ENCODE measurements at regions of chr12 and their contacts with region 1.

Region 1: DNA sequence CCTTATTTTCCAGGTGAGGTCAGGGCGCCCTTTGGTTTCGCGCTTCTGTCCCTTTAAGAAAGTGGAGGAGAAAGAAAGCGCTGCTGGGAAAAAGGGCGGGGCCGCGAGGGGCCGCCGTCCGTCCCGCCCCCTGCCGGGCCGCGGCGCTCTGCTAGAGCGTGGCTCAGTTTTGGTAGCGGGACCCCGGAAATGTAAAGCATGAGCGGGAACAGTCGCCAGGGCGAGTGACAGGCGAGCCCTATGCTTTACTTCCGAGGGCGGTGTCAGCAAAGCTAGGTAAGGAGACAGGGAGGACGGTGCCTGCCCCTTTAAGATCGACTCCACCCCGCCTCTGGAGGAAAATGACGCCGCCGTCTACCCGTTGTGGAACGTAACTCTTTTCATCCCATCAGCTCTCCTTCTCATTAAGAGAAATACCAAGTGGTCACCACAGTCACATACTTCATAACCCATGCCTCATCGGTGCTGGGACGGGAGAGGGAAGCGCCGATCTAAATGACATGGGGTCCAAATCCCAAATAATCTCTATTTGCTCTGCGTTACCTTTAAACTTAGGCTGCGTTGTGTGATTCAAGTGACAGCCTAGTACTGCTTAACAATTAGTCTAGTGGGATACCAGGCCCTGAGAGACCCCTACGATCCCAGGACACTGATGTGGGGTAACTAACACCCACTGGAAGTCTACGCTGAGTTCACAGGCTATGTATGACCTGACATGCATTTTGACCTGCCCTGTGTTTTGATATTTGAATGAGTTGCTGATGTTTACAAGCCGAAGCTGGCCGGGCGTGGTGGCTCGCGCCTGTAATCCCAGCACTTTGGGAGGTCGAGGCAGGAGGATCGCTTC is at the start of gene ETFBKMT:
- DNase-seq: peak; percentile 96
- H3K4me3 ChIP-seq: peak within 1 kb of the TSS; percentile 53
- H3K27ac ChIP-seq: peak within 1 kb of the TSS; percentile 89
- H3K4me1 ChIP-seq: peaks cover 3% of the 10 kb centered on the region
- H3K27me3 ChIP-seq: no peaks in the 10 kb centered on the region
- CTCF ChIP-seq: peak; percentile 44
- total RNA-seq, gene ETFBKMT: 1.9 and 2.6 TPM in 2 replicates

Region 2: GRCh38 chr12:31558521-31558920 is 100.8 kb before region 1 on chr12:
- CTCF ChIA-PET with region 1: no interaction called
- POLR2A ChIA-PET with region 1: no interaction called
- intact Hi-C with region 1: no loop called
- DNase-seq: no peak
- H3K4me3 ChIP-seq: no peak overlapping the region
- H3K27ac ChIP-seq: no peak overlapping the region
- H3K4me1 ChIP-seq: no peaks in the 10 kb centered on the region
- H3K27me3 ChIP-seq: no peaks in the 10 kb centered on the region
- CTCF ChIP-seq: no peak

Region 3: GRCh38 chr12:32679091-32679919 is 1020.0 kb after region 1 on chr12 and contains the start of gene DNM1L:
- CTCF ChIA-PET with region 1: no interaction called
- POLR2A ChIA-PET with region 1: no interaction called
- intact Hi-C with region 1: loop called (anchors 10 kb)
- DNase-seq: peak; percentile 98
- H3K4me3 ChIP-seq: peak within 1 kb of the TSS; percentile 86
- H3K27ac ChIP-seq: peak within 1 kb of the TSS; percentile 90
- H3K4me1 ChIP-seq: peaks cover 10% of the 10 kb centered on the region
- H3K27me3 ChIP-seq: no peaks in the 10 kb centered on the region
- CTCF ChIP-seq: no peak
- total RNA-seq, gene DNM1L: 102 and 121 TPM in 2 replicates

Region 4: DNA sequence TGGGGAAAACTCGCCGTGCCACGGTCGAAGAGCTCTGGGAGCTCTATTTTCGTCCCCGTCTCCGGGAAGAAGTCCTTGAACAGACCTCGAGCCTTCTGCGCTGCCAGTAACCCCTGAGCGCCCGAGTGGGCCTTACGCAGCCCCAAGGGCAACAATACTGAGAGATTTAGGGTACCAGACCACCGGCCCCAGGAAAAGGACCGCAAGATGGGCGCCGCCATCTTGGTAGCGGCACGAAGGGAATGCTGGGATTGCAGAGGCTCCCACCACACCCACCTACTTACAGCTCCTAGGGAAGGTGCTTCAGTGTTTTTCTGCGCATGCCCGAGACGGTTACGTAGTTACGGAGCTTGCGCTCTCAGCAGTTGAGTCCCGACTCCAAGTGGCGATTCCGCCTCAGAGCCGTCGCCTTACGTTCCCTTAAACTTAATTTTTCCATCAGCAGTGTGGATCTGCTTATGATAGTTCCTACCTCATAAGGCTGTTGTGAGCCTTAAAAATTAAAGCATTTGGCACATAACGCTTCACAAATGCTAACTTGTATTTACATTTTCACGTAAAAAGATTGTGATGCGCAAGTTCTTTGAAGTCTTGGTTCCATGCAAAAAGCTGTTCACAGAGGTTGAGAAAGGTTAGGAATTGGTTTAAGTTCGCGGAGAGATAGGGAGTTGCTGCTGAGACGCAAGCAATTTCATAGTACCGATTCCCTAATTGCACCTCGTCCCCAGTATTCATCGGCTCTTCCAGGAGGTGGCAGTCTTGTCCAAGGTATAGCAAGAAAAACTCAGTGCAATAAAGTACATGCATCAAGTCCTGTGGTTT is 1096.6 kb after region 1 on chr12 and contains the start of gene YARS2:
- CTCF ChIA-PET with region 1: interaction called, 10 read pairs
- POLR2A ChIA-PET with region 1: no interaction called
- intact Hi-C with region 1: no loop called
- DNase-seq: peak; percentile 99
- H3K4me3 ChIP-seq: peak within 1 kb of the TSS; percentile 65
- H3K27ac ChIP-seq: peak within 1 kb of the TSS; percentile 87
- H3K4me1 ChIP-seq: no peaks in the 10 kb centered on the region
- H3K27me3 ChIP-seq: no peaks in the 10 kb centered on the region
- CTCF ChIP-seq: peak; percentile 88
- total RNA-seq, gene YARS2: 29.1 and 29.4 TPM in 2 replicates

Measured in A673 (cell line).